Endothelial cell of umbilical vein (primary cell): ENCODE measurements at regions of chr2 and their contacts with region 1.

Region 1: GRCh38 chr2:229445019-229445418 is 173.9 kb upstream of the PID1 start:
- DNase-seq: peak; percentile 87
- H3K4me3 ChIP-seq: no peak overlapping the region
- H3K27ac ChIP-seq: peak overlapping the region; percentile 56
- H3K4me1 ChIP-seq: peaks cover 8% of the 10 kb centered on the region
- H3K27me3 ChIP-seq: peaks cover 0 to 2% of the 10 kb centered on the region in 2 experiments
- CTCF ChIP-seq: no peak
- POLR2A ChIP-seq: no peak

Region 2: GRCh38 chr2:229454934-229455631 is 10.1 kb after region 1 on chr2:
- CTCF ChIA-PET with region 1: interaction called, 10 read pairs
- POLR2A ChIA-PET with region 1: no interaction called
- dilution Hi-C with region 1: no loop called
- intact Hi-C with region 1: loop called (anchors 1 kb)
- DNase-seq: peak; percentile 67
- H3K4me3 ChIP-seq: no peak overlapping the region
- H3K27ac ChIP-seq: peak overlapping the region; percentile 75
- H3K4me1 ChIP-seq: peaks cover 22% of the 10 kb centered on the region
- H3K27me3 ChIP-seq: no peaks in the 10 kb centered on the region
- CTCF ChIP-seq: no peak
- POLR2A ChIP-seq: no peak

Region 3: GRCh38 chr2:229475778-229476177 is 30.8 kb after region 1 on chr2:
- CTCF ChIA-PET with region 1: no interaction called
- POLR2A ChIA-PET with region 1: no interaction called
- dilution Hi-C with region 1: no loop called
- intact Hi-C with region 1: no loop called
- DNase-seq: no peak
- H3K4me3 ChIP-seq: no peak overlapping the region
- H3K27ac ChIP-seq: no peak overlapping the region
- H3K4me1 ChIP-seq: no peaks in the 10 kb centered on the region
- H3K27me3 ChIP-seq: no peaks in the 10 kb centered on the region
- CTCF ChIP-seq: no peak
- POLR2A ChIP-seq: no peak